Caco-2 (cell line): ENCODE measurements at regions of chr14 and their contacts with region 1.

Region 1: DNA sequence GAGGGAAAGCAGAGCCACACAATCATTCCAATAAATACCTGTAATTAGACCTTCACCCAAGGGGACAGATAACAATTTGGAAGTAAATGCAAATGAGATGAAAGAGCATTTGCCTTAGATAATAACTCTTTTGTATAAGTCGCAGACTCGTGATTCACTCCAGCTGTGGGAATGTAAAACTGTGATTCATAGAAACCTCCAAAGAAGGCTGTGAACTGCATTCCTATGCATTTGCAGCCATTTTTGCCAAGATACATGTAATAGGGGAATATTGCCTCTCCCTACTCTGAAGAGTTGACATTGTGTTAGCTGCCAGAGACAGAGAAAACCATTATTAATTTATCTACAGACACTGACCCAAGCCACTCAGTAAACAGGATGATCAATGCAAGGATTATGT is 181.9 kb upstream of the ARHGAP5 start:
- DNase-seq: no peak
- H3K4me3 ChIP-seq: no peak overlapping the region
- H3K4me3 Mint-ChIP-seq: no peak overlapping the region
- H3K27ac Mint-ChIP-seq: no peak overlapping the region
- H3K4me1 ChIP-seq: peaks cover 6% of the 10 kb centered on the region; the same call in 1 of the 2 replicates
- H3K4me1 Mint-ChIP-seq: peaks cover 10% of the 10 kb centered on the region
- H3K27me3 ChIP-seq: no peaks in the 10 kb centered on the region
- H3K27me3 Mint-ChIP-seq: no peaks in the 10 kb centered on the region
- CTCF ChIP-seq: no peak

Region 2: GRCh38 chr14:31510222-31510621 is 385.0 kb before region 1 on chr14:
- CTCF ChIA-PET with region 1: no interaction called
- POLR2A ChIA-PET with region 1: no interaction called
- intact Hi-C with region 1: loop called (anchors 5 kb)
- DNase-seq: no peak
- H3K4me3 ChIP-seq: no peak overlapping the region
- H3K4me3 Mint-ChIP-seq: no peak overlapping the region
- H3K27ac Mint-ChIP-seq: no peak overlapping the region
- H3K4me1 ChIP-seq: no peaks in the 10 kb centered on the region
- H3K4me1 Mint-ChIP-seq: no peaks in the 10 kb centered on the region
- H3K27me3 ChIP-seq: no peaks in the 10 kb centered on the region
- H3K27me3 Mint-ChIP-seq: peaks cover 7% of the 10 kb centered on the region
- CTCF ChIP-seq: peak; percentile 48 to 51

Region 3: GRCh38 chr14:31992011-31992447 is 96.8 kb after region 1 on chr14:
- CTCF ChIA-PET with region 1: no interaction called
- POLR2A ChIA-PET with region 1: no interaction called
- intact Hi-C with region 1: no loop called
- DNase-seq: no peak
- H3K4me3 ChIP-seq: no peak overlapping the region
- H3K4me3 Mint-ChIP-seq: no peak overlapping the region
- H3K27ac Mint-ChIP-seq: no peak overlapping the region
- H3K4me1 ChIP-seq: peaks cover 19% of the 10 kb centered on the region
- H3K4me1 Mint-ChIP-seq: peaks cover 38% of the 10 kb centered on the region
- H3K27me3 ChIP-seq: no peaks in the 10 kb centered on the region
- H3K27me3 Mint-ChIP-seq: no peaks in the 10 kb centered on the region
- CTCF ChIP-seq: no peak